Right ventricle myocardium superior (tissue), 1 donor: ENCODE measurements at regions of chr17 and their contacts with region 1.

Region 1: DNA sequence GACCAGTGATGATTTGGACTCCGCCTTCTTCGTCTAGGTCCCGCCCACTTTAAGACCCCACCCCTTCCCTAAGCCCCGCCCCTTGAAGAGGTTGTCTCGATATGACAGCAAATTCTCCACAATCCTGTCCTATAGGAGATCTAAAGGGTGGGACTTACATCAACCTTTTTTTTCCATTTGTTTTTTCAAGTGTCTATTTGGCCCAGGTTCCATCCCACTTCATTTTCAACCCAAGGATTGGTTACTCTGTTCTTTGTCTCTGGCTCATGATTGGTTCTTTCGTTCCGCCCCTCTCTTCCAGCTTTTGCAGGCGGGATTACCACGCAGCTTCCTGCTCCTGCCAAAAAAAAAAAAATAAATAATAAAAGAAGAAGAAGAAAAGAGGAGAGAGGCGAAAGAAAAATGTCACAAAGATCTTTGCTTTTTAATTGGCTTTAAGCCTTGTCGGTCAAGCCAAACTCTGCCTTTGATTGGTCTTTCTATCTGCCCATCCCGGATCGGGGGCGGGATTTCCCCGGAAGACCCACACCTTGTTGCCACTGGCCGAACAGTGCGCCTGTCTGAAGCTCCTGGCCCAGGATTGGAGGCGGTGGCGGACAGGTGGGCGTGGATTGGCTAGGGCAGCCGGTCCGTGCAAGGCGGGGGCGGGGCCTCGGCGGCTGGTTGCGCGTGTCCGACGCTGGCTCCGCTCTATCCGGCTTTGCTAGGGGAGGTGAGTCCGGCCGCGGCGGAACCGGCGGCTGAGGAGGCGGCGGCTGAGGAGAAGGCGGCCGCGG is 1.2 kb upstream of the NLK start:
- DNase-seq: peak; percentile 100
- ATAC-seq: peak; percentile 98

Region 2: GRCh38 chr17:27892866-27893769 is 148.1 kb before region 1 on chr17 and contains the start of gene LYRM9:
- intact Hi-C with region 1: loop called (anchors 10 kb)
- DNase-seq: peak; percentile 96
- ATAC-seq: peak; percentile 100
- total RNA-seq, gene LYRM9: 9.4 TPM

Region 3: GRCh38 chr17:28071891-28072606 is 30.8 kb after region 1 on chr17:
- intact Hi-C with region 1: no loop called
- DNase-seq: no peak
- ATAC-seq: no peak